SK-N-SH (cell line): ENCODE measurements at regions of chr4 and their contacts with region 1.

Region 1: GRCh38 chr4:138035781-138036258 is 206.3 kb downstream of the SLC7A11 start:
- DNase-seq: peak; percentile 59
- H3K4me3 ChIP-seq: no peak overlapping the region; a peak in 1 of 4 replicates
- H3K27ac ChIP-seq: no peak overlapping the region
- H3K4me1 ChIP-seq: no peaks in the 10 kb centered on the region; a peak in 1 of 4 replicates
- H3K27me3 ChIP-seq: no peaks in the 10 kb centered on the region
- CTCF ChIP-seq: peak; percentile 83
- EP300 ChIP-seq: no peak
- RAD21 ChIP-seq: peak; percentile 90

Region 2: DNA sequence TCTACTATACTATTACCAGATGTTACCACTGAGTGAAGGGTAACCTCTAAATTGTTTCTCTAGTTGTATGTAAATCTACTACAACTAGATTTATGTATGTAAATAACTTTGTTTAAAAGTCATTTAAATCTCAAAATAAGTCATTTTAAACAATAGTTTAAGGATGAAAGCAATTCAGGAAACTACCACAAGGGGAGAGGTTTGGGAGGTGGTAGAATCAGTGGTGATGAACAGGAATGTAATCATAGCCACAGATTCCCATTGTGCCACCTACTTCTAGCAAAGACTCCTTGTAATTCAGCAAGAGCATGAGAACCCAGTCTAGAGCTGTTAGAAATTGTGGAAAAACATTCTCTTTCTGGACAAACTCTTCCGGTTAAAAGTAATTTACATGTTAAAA is 28.2 kb before region 1 on chr4:
- CTCF ChIA-PET with region 1: no interaction called
- POLR2A ChIA-PET with region 1: no interaction called
- DNase-seq: peak; percentile 4
- H3K4me3 ChIP-seq: no peak overlapping the region
- H3K27ac ChIP-seq: no peak overlapping the region
- H3K4me1 ChIP-seq: no peaks in the 10 kb centered on the region; a peak in 1 of 4 replicates
- H3K27me3 ChIP-seq: no peaks in the 10 kb centered on the region
- CTCF ChIP-seq: peak; percentile 41
- EP300 ChIP-seq: no peak
- RAD21 ChIP-seq: no peak

Region 3: GRCh38 chr4:138096384-138097062 is 60.7 kb after region 1 on chr4:
- CTCF ChIA-PET with region 1: interaction called, 33 read pairs
- POLR2A ChIA-PET with region 1: no interaction called
- DNase-seq: no peak
- H3K4me3 ChIP-seq: no peak overlapping the region
- H3K27ac ChIP-seq: no peak overlapping the region
- H3K4me1 ChIP-seq: no peaks in the 10 kb centered on the region
- H3K27me3 ChIP-seq: no peaks in the 10 kb centered on the region
- CTCF ChIP-seq: no peak
- EP300 ChIP-seq: no peak
- RAD21 ChIP-seq: no peak

Region 4: GRCh38 chr4:138182838-138183426 is 147.1 kb after region 1 on chr4:
- CTCF ChIA-PET with region 1: interaction called, 19 read pairs
- POLR2A ChIA-PET with region 1: no interaction called
- DNase-seq: peak; percentile 10
- H3K4me3 ChIP-seq: no peak overlapping the region
- H3K27ac ChIP-seq: no peak overlapping the region
- H3K4me1 ChIP-seq: peaks cover 0 to 2% of the 10 kb centered on the region in 2 experiments; a peak in 1 of 4 replicates
- H3K27me3 ChIP-seq: no peaks in the 10 kb centered on the region
- CTCF ChIP-seq: peak; percentile 85
- EP300 ChIP-seq: no peak
- RAD21 ChIP-seq: peak; percentile 90

Region 5: GRCh38 chr4:138255917-138256597 is 220.2 kb after region 1 on chr4:
- CTCF ChIA-PET with region 1: no interaction called
- POLR2A ChIA-PET with region 1: no interaction called
- DNase-seq: no peak
- H3K4me3 ChIP-seq: no peak overlapping the region
- H3K27ac ChIP-seq: no peak overlapping the region
- H3K4me1 ChIP-seq: peaks cover 0 to 20% of the 10 kb centered on the region in 2 experiments; a peak in 2 of 4 replicates
- H3K27me3 ChIP-seq: no peaks in the 10 kb centered on the region
- CTCF ChIP-seq: no peak
- EP300 ChIP-seq: no peak
- RAD21 ChIP-seq: no peak

Region 6: GRCh38 chr4:138938366-138938690 is 902.5 kb after region 1 on chr4:
- CTCF ChIA-PET with region 1: interaction called, 10 read pairs
- POLR2A ChIA-PET with region 1: no interaction called
- DNase-seq: peak; percentile 42
- H3K4me3 ChIP-seq: no peak overlapping the region
- H3K27ac ChIP-seq: no peak overlapping the region
- H3K4me1 ChIP-seq: peaks cover 0 to 2% of the 10 kb centered on the region in 2 experiments; a peak in 1 of 4 replicates
- H3K27me3 ChIP-seq: no peaks in the 10 kb centered on the region
- CTCF ChIP-seq: peak; percentile 65
- EP300 ChIP-seq: no peak
- RAD21 ChIP-seq: peak; percentile 87